H1 (cell line): ENCODE measurements at regions of chr11 and their contacts with region 1.

Region 1: GRCh38 chr11:77047007-77047927 is 13.1 kb downstream of the B3GNT6 start:
- DNase-seq: peak in 1 of 2 experiments; percentile 64
- H3K4me3 ChIP-seq: peak overlapping the region in 1 of 4 experiments; percentile 34; a peak in 1 of 8 replicates
- H3K27ac ChIP-seq: no peak overlapping the region
- H3K4me1 ChIP-seq: peaks cover 0 to 4% (median 0%) of the 10 kb centered on the region in 4 experiments; a peak in 3 of 7 replicates
- H3K27me3 ChIP-seq: peaks cover 0 to 5% (median under 1%) of the 10 kb centered on the region in 4 experiments; a peak in 2 of 7 replicates
- CTCF ChIP-seq: peak in 2 of 3 experiments; percentile 55 to 60; a peak in 3 of 4 replicates
- EP300 ChIP-seq: no peak
- POLR2A ChIP-seq: no peak
- RAD21 ChIP-seq: peak; percentile 49 to 54

Region 2: GRCh38 chr11:76974179-76974891 is 72.9 kb before region 1 on chr11:
- CTCF ChIA-PET with region 1: no interaction called
- POLR2A ChIA-PET with region 1: no interaction called
- DNase-seq: no peak
- H3K4me3 ChIP-seq: no peak overlapping the region
- H3K27ac ChIP-seq: no peak overlapping the region
- H3K4me1 ChIP-seq: no peaks in the 10 kb centered on the region
- H3K27me3 ChIP-seq: no peaks in the 10 kb centered on the region
- CTCF ChIP-seq: no peak
- EP300 ChIP-seq: no peak
- POLR2A ChIP-seq: no peak
- RAD21 ChIP-seq: no peak

Region 3: GRCh38 chr11:77027270-77027669 is 20.0 kb before region 1 on chr11:
- CTCF ChIA-PET with region 1: interaction called, 10 read pairs
- POLR2A ChIA-PET with region 1: no interaction called
- DNase-seq: no peak
- H3K4me3 ChIP-seq: no peak overlapping the region
- H3K27ac ChIP-seq: no peak overlapping the region
- H3K4me1 ChIP-seq: no peaks in the 10 kb centered on the region; a peak in 3 of 7 replicates
- H3K27me3 ChIP-seq: 0 out of 7 replicates have a peak, but pooled peaks cover 0 to 2% (median 0%) of the 10 kb centered on the region in 4 experiments
- CTCF ChIP-seq: no peak
- EP300 ChIP-seq: no peak
- POLR2A ChIP-seq: no peak
- RAD21 ChIP-seq: no peak

Region 4: GRCh38 chr11:77082838-77083562 is 35.7 kb after region 1 on chr11:
- CTCF ChIA-PET with region 1: interaction called, 201 read pairs
- POLR2A ChIA-PET with region 1: no interaction called
- DNase-seq: no peak
- H3K4me3 ChIP-seq: no peak overlapping the region
- H3K27ac ChIP-seq: no peak overlapping the region
- H3K4me1 ChIP-seq: peaks cover 0 to 2% (median 0%) of the 10 kb centered on the region in 4 experiments; a peak in 2 of 7 replicates
- H3K27me3 ChIP-seq: no peaks in the 10 kb centered on the region
- CTCF ChIP-seq: no peak
- EP300 ChIP-seq: no peak
- POLR2A ChIP-seq: no peak
- RAD21 ChIP-seq: no peak

Region 5: GRCh38 chr11:77101052-77101537 is 53.8 kb after region 1 on chr11:
- CTCF ChIA-PET with region 1: interaction called, 201 read pairs
- POLR2A ChIA-PET with region 1: no interaction called
- DNase-seq: no peak
- H3K4me3 ChIP-seq: no peak overlapping the region
- H3K27ac ChIP-seq: no peak overlapping the region
- H3K4me1 ChIP-seq: no peaks in the 10 kb centered on the region
- H3K27me3 ChIP-seq: no peaks in the 10 kb centered on the region
- CTCF ChIP-seq: peak; percentile 60 to 79 (median 71)
- EP300 ChIP-seq: no peak
- POLR2A ChIP-seq: no peak
- RAD21 ChIP-seq: peak; percentile 48 to 60

Region 6: DNA sequence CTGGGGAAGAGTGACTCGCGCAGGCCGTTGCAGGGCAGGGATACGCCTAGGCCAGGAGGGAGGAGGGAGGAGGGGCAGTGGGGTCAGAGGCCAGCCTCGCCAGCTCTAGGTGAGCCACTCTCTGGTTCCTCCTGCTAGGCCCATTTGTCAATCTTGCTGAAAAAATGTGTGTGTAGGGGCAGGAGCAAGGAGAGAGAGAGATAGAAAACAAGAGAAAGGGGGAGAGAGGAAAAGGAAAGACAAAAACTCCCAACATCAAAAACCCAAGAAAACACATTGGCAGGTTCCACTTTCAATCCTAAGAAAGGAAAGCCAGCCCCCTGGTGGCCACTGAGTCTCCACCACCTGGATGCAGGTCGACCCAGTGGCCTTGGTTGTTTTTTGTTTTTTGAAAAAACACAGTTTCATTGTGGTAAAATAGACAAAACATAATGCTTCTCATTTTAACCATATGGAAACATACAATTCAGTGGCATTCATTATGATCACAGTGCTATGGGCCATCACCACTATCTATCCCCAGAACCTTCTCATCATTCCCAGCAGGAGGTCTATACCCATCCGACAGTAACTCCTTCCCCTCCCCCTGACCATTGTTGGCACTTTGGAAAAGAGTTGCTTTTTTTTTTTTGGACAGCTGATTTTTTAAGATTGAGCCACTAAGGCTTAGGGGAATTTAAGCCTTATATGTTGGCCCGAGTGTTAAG is 66.3 kb after region 1 on chr11:
- CTCF ChIA-PET with region 1: interaction called, 16 read pairs
- POLR2A ChIA-PET with region 1: no interaction called
- DNase-seq: peak in 1 of 2 experiments; percentile 75
- H3K4me3 ChIP-seq: no peak overlapping the region
- H3K27ac ChIP-seq: no peak overlapping the region
- H3K4me1 ChIP-seq: peaks cover 0 to 3% (median 1%) of the 10 kb centered on the region in 4 experiments; a peak in 3 of 7 replicates
- H3K27me3 ChIP-seq: no peaks in the 10 kb centered on the region
- CTCF ChIP-seq: peak; percentile 44 to 66 (median 59)
- EP300 ChIP-seq: no peak
- POLR2A ChIP-seq: no peak
- RAD21 ChIP-seq: peak; percentile 47 to 50

Region 7: DNA sequence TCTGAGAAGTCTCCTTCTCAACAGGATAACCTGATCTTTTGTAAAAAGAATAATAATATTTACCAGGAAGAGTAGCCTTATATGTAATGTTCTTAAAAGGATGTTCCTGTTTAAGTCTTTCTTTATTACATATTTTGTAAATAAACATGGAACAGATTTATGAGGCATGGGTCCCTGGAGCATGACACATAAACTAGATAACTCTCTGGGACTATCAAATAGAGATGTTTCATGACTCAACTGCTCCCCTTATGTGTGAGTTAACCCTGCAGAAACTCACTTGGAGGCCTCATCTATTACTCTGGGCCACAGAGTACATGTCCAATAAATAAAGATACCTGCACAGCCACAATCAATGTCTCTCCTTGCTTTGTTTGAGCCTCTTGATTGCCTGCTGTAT is 189.6 kb after region 1 on chr11:
- CTCF ChIA-PET with region 1: no interaction called
- POLR2A ChIA-PET with region 1: no interaction called
- DNase-seq: no peak
- H3K4me3 ChIP-seq: no peak overlapping the region
- H3K27ac ChIP-seq: no peak overlapping the region
- H3K4me1 ChIP-seq: no peaks in the 10 kb centered on the region
- H3K27me3 ChIP-seq: no peaks in the 10 kb centered on the region
- CTCF ChIP-seq: no peak
- EP300 ChIP-seq: no peak
- POLR2A ChIP-seq: no peak
- RAD21 ChIP-seq: no peak